CD8-positive, alpha-beta T cell (primary cell): ENCODE measurements at regions of chr17 and their contacts with region 1.

Region 1: GRCh38 chr17:40191237-40192208 is 14.3 kb downstream of the RAPGEFL1 start:
- DNase-seq: peak; percentile 36 to 80 (median 67)
- ATAC-seq: peak; percentile 73
- H3K4me3 ChIP-seq: peak overlapping the region; percentile 51 to 55
- H3K4me3 Mint-ChIP-seq: peak overlapping the region; percentile 95
- H3K27ac ChIP-seq: no peak overlapping the region
- H3K27ac Mint-ChIP-seq: peak overlapping the region; percentile 41
- H3K4me1 ChIP-seq: no peaks in the 10 kb centered on the region
- H3K4me1 Mint-ChIP-seq: peaks cover 9% of the 10 kb centered on the region
- H3K27me3 ChIP-seq: no peaks in the 10 kb centered on the region
- H3K27me3 Mint-ChIP-seq: no peaks in the 10 kb centered on the region
- CTCF ChIP-seq: peak; percentile 49

Region 2: GRCh38 chr17:39952680-39953470 is 238.6 kb before region 1 on chr17:
- CTCF ChIA-PET with region 1: no interaction called
- POLR2A ChIA-PET with region 1: no interaction called
- intact Hi-C with region 1: loop called in 1 of 2 experiments (anchors 1 kb)
- DNase-seq: peak; percentile 92 to 97 (median 95)
- ATAC-seq: peak; percentile 87
- H3K4me3 ChIP-seq: peak overlapping the region; percentile 66 to 80
- H3K4me3 Mint-ChIP-seq: peak overlapping the region; percentile 86
- H3K27ac ChIP-seq: peak overlapping the region; percentile 51 to 74
- H3K27ac Mint-ChIP-seq: peak overlapping the region; percentile 89
- H3K4me1 ChIP-seq: peaks cover 26% of the 10 kb centered on the region
- H3K4me1 Mint-ChIP-seq: peaks cover 22% of the 10 kb centered on the region
- H3K27me3 ChIP-seq: no peaks in the 10 kb centered on the region
- H3K27me3 Mint-ChIP-seq: no peaks in the 10 kb centered on the region
- CTCF ChIP-seq: no peak

Region 3: GRCh38 chr17:40021451-40021971 is 170.0 kb before region 1 on chr17:
- CTCF ChIA-PET with region 1: interaction called, 50 read pairs
- POLR2A ChIA-PET with region 1: no interaction called
- intact Hi-C with region 1: no loop called
- DNase-seq: no peak
- ATAC-seq: no peak
- H3K4me3 ChIP-seq: no peak overlapping the region
- H3K4me3 Mint-ChIP-seq: no peak overlapping the region
- H3K27ac ChIP-seq: no peak overlapping the region
- H3K27ac Mint-ChIP-seq: no peak overlapping the region
- H3K4me1 ChIP-seq: peaks cover 14% of the 10 kb centered on the region
- H3K4me1 Mint-ChIP-seq: peaks cover 14% of the 10 kb centered on the region
- H3K27me3 ChIP-seq: no peaks in the 10 kb centered on the region
- H3K27me3 Mint-ChIP-seq: no peaks in the 10 kb centered on the region
- CTCF ChIP-seq: no peak

Region 4: GRCh38 chr17:40177275-40177874 is 14.1 kb before region 1 on chr17 and contains the start of gene RAPGEFL1:
- CTCF ChIA-PET with region 1: interaction called, 15 read pairs
- POLR2A ChIA-PET with region 1: no interaction called
- intact Hi-C with region 1: loop called in 1 of 2 experiments (anchors 1 kb)
- DNase-seq: peak; percentile 70 to 90 (median 81)
- ATAC-seq: peak; percentile 99
- H3K4me3 ChIP-seq: peak within 1 kb of the TSS; percentile 53 to 54
- H3K4me3 Mint-ChIP-seq: peak within 1 kb of the TSS; percentile 72
- H3K27ac ChIP-seq: no peak within 1 kb of the TSS
- H3K27ac Mint-ChIP-seq: no peak within 1 kb of the TSS
- H3K4me1 ChIP-seq: peaks cover 12% of the 10 kb centered on the region
- H3K4me1 Mint-ChIP-seq: peaks cover 11% of the 10 kb centered on the region
- H3K27me3 ChIP-seq: no peaks in the 10 kb centered on the region
- H3K27me3 Mint-ChIP-seq: no peaks in the 10 kb centered on the region
- CTCF ChIP-seq: no peak
- total RNA-seq, gene RAPGEFL1: 8.8 to 9.2 TPM

Region 5: DNA sequence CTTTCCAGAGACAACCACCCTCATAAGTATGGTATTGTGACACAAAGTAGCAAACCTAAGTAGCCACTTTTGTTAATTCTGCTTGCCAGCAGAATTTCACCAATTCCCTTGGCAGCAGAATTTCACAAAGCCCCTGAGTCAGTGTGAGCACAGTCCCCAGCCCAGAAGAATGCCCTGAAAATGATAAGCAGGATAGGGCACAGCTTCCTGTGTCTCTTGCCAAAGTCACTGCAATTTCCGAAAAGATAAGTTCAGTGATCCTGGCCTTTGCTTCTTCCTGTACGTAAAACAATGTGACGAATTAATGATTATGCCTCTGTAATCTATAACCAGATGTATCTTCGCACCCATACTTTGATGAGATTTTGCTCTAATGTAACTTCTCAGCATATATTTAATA is 11.6 kb after region 1 on chr17:
- CTCF ChIA-PET with region 1: interaction called, 15 read pairs
- POLR2A ChIA-PET with region 1: no interaction called
- intact Hi-C with region 1: no loop called
- DNase-seq: no peak
- ATAC-seq: no peak
- H3K4me3 ChIP-seq: no peak overlapping the region
- H3K4me3 Mint-ChIP-seq: no peak overlapping the region
- H3K27ac ChIP-seq: no peak overlapping the region
- H3K27ac Mint-ChIP-seq: no peak overlapping the region
- H3K4me1 ChIP-seq: no peaks in the 10 kb centered on the region
- H3K4me1 Mint-ChIP-seq: peaks cover 8% of the 10 kb centered on the region
- H3K27me3 ChIP-seq: peaks cover 0 to 4% of the 10 kb centered on the region in 2 experiments
- H3K27me3 Mint-ChIP-seq: peaks cover 6% of the 10 kb centered on the region
- CTCF ChIP-seq: no peak

Region 6: GRCh38 chr17:40647624-40648383 is 456.3 kb after region 1 on chr17 and contains the start of gene SMARCE1:
- CTCF ChIA-PET with region 1: no interaction called
- POLR2A ChIA-PET with region 1: no interaction called
- intact Hi-C with region 1: no loop called
- DNase-seq: peak; percentile 51 to 88 (median 73)
- ATAC-seq: peak; percentile 66
- H3K4me3 ChIP-seq: peak within 1 kb of the TSS; percentile 85 to 96
- H3K4me3 Mint-ChIP-seq: peak within 1 kb of the TSS; percentile 95
- H3K27ac ChIP-seq: peak within 1 kb of the TSS; percentile 95 to 99
- H3K27ac Mint-ChIP-seq: peak within 1 kb of the TSS; percentile 99
- H3K4me1 ChIP-seq: peaks cover 36% of the 10 kb centered on the region
- H3K4me1 Mint-ChIP-seq: peaks cover 40% of the 10 kb centered on the region
- H3K27me3 ChIP-seq: no peaks in the 10 kb centered on the region
- H3K27me3 Mint-ChIP-seq: no peaks in the 10 kb centered on the region
- CTCF ChIP-seq: no peak
- total RNA-seq, gene SMARCE1: 64.8 to 74.9 TPM